BJ (cell line): ENCODE measurements at regions of chr6 and their contacts with region 1.

Region 1: GRCh38 chr6:3732345-3733141 is 19.0 kb downstream of the PXDC1 start:
- DNase-seq: no peak
- H3K4me3 ChIP-seq: no peak overlapping the region
- H3K27me3 ChIP-seq: no peaks in the 10 kb centered on the region
- CTCF ChIP-seq: peak; percentile 91

Region 2: DNA sequence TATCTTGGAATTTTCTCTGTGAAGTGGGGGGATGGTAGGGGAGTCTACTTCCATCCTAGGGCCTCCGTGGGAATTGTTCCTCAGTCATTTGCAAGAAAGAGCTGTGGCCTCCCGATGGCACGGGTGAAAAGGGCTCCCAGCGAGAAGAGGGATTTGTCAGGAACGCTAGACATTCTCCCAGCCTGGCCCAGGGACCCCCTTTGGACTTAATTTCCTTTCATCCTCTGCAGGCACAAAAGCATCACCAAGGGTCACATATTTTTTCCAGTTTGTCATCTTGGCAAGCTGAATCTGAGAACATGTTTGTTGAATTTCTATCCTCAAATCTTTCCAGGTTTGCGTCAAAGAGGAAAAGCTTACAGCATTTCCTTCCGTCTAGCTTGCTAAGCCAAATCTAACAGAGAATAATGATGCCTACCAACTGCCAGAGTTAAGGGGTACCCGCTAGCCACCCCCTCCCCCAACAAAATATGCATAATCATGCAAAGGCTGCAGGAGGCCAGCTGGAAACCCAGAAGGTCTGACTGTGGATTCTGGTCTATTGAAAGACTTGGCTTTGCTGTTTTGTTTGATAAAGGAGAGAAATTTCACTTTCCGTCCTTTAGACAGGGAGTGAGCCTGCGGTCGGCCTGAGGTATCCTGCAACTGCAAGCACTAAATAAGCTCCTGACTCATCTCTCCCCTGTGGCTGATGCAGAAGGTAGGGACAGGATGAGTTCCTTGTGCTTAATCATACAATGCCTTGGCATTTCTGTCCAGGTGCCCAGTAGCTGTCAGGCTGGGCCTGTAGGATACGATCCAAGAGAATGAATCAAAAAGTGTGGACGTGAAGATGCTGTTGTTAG is 450.7 kb before region 1 on chr6:
- CTCF ChIA-PET with region 1: interaction called, 74 read pairs
- POLR2A ChIA-PET with region 1: no interaction called
- DNase-seq: peak; percentile 25
- H3K4me3 ChIP-seq: no peak overlapping the region
- H3K27me3 ChIP-seq: no peaks in the 10 kb centered on the region
- CTCF ChIP-seq: no peak

Region 3: GRCh38 chr6:3410385-3411360 is 321.9 kb before region 1 on chr6:
- CTCF ChIA-PET with region 1: interaction called, 45 read pairs
- POLR2A ChIA-PET with region 1: no interaction called
- DNase-seq: no peak
- H3K4me3 ChIP-seq: no peak overlapping the region
- H3K27me3 ChIP-seq: no peaks in the 10 kb centered on the region
- CTCF ChIP-seq: peak; percentile 86

Region 4: GRCh38 chr6:3742426-3743344 is 10.1 kb after region 1 on chr6:
- CTCF ChIA-PET with region 1: interaction called, 15 read pairs
- POLR2A ChIA-PET with region 1: no interaction called
- DNase-seq: no peak
- H3K4me3 ChIP-seq: no peak overlapping the region
- H3K27me3 ChIP-seq: no peaks in the 10 kb centered on the region
- CTCF ChIP-seq: peak; percentile 90

Region 5: GRCh38 chr6:3887150-3887700 is 154.7 kb after region 1 on chr6:
- CTCF ChIA-PET with region 1: interaction called, 15 read pairs
- POLR2A ChIA-PET with region 1: no interaction called
- DNase-seq: no peak
- H3K4me3 ChIP-seq: no peak overlapping the region
- H3K27me3 ChIP-seq: no peaks in the 10 kb centered on the region
- CTCF ChIP-seq: peak; percentile 63